ENCODE measurements at regions of chr12 and their contacts with region 1.

Region 1: GRCh38 chr12:56104109-56104814 is at the start of gene PA2G4:
- DNase-seq: peak; percentile 98 to 99
- H3K4me3 ChIP-seq: peak within 1 kb of the TSS; percentile 70 to 96 (median 90)
- H3K27ac ChIP-seq: peak within 1 kb of the TSS; percentile 66 to 83 (median 76)
- H3K4me1 ChIP-seq: peaks cover 0 to 17% of the 10 kb centered on the region in 2 donors
- H3K27me3 ChIP-seq: no peaks in the 10 kb centered on the region
- CTCF ChIP-seq: peak in 1 of 6 experiments; percentile 4
- POLR2A ChIP-seq: peak; percentile 58 to 97
- total RNA-seq, gene PA2G4: 94.0 to 142 (median 122) TPM

Region 2: DNA sequence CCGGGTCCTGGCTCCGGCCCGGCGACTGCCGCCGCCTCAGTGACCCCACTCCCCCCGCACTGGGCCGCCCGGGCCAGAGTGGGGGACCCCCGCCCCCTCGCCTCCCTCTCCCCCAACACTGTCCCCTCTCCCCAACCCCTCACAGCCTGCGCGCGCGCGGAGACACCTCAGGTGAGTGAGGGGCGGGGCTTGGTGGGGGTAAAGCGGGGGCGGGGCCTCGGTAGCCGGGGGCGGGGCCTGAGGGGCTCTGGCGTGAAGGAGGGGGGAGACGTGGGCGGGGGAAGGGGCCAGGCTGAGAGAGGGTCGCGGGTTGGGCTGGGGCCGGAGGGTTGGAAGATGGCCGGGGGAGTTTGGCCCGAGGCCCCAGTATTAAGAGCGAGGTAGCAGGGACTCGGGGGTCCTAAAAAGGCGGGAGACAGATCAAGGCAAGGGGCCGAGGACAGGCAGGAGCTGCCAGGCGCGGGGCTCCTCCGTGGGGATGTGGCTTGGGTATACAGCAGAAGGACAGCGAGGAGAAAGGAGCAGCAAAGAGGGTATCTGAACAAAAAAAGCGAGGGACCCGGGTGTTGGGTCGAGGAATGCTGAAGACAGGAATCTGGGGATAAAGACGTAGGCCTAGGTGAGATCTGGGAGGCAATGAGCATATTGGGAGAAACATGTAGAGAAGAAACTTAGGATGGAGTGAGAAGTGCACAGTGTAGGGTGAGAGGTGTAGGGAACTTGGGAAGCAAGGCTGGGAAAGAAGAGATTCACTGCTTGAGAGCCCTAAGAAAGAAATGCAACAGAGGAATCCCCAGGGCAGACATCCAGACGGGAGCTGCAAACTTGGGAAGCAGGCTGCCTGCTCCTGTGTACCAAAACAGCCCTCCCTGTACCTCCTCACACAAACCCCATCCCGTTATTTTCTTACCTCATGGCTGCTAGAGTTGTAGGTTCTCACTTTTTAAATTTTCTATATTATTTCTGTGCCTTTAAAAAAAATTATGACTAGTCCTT is 96.4 kb before region 1 on chr12:
- intact Hi-C with region 1: no loop called
- DNase-seq: peak; percentile 73 to 75
- H3K4me3 ChIP-seq: peak overlapping the region; percentile 24 to 91 (median 65)
- H3K27ac ChIP-seq: peak overlapping the region; percentile 96 to 98 (median 98)
- H3K4me1 ChIP-seq: peaks cover 4 to 9% of the 10 kb centered on the region in 2 donors
- H3K27me3 ChIP-seq: no peaks in the 10 kb centered on the region
- CTCF ChIP-seq: no peak
- POLR2A ChIP-seq: no peak

Region 3: DNA sequence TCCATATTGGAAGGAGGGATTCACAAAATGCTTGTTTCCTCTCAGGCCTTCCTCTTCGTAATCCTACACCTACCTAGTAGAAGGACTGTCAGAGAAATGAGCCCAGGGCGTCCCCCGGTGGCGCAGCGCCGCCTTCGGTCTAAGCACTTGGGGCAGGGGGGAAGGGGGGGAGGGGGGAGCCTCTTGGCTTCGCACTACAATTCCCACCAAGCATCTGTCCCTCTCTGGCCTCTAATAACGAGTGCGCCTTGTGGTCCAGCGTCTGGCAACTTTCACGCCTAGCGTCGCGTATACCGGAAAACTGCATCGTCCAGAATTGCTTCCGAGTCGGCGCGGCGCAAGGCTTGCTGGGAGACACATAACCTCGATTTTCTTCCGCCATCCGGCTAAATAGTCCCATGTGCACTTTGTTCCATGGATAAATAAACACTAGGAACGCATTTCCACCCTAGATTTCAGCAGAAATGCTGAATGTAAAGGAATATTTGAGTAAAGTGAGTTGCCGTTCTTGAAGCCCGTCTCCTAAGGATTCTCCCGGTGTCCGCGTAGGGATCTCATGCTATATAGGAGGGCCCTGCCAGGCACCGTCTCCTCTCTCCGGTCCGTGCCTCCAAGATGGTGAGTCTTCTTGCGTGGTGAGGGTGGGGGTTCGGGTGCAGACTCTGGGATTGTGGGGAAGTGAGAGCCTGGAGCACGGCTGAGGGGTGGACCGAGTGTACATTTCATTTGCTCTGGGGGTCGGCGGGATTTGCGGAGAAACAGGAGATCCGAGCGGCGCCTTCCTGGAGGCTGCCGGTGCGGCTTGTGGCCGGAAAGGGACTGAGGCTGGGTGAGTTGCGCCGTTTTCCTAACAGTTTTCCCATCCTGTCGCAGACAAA is 62.5 kb before region 1 on chr12 and contains the start of gene RPS26:
- intact Hi-C with region 1: loop called (anchors 10 kb)
- DNase-seq: peak; percentile 97 to 98
- H3K4me3 ChIP-seq: peak within 1 kb of the TSS; percentile 74 to 88 (median 80)
- H3K27ac ChIP-seq: peak within 1 kb of the TSS; percentile 94 to 97 (median 94)
- H3K4me1 ChIP-seq: peaks cover 7 to 11% of the 10 kb centered on the region in 2 donors
- H3K27me3 ChIP-seq: no peaks in the 10 kb centered on the region
- CTCF ChIP-seq: peak in 3 of 6 experiments; percentile 14 to 61 (median 45)
- POLR2A ChIP-seq: peak in 1 of 2 donors; percentile 88
- total RNA-seq, gene RPS26: 81.4 to 1,193 (median 632) TPM